Adrenal gland (tissue), 19 donors: ENCODE measurements at regions of chrX and their contacts with region 1.

Region 1: GRCh38 chrX:50680990-50681389 is 133.0 kb downstream of the SHROOM4 start:
- DNase-seq: peak in 2 of 7 donors; percentile 22 to 52
- H3K4me3 ChIP-seq: no peak overlapping the region
- H3K27ac ChIP-seq: no peak overlapping the region
- H3K4me1 ChIP-seq: no peaks in the 10 kb centered on the region
- H3K27me3 ChIP-seq: peaks cover 14% of the 10 kb centered on the region
- CTCF ChIP-seq: peak in 4 of 6 experiments; percentile 23 to 38 (median 30)
- POLR2A ChIP-seq: no peak

Region 2: GRCh38 chrX:50913520-50913919 is 232.5 kb after region 1 on chrX:
- intact Hi-C with region 1: loop called in 1 of 2 experiments (anchors 10 kb)
- DNase-seq: no peak
- H3K4me3 ChIP-seq: no peak overlapping the region
- H3K27ac ChIP-seq: no peak overlapping the region
- H3K4me1 ChIP-seq: no peaks in the 10 kb centered on the region
- H3K27me3 ChIP-seq: peaks cover 20% of the 10 kb centered on the region
- CTCF ChIP-seq: no peak
- POLR2A ChIP-seq: no peak